ENCODE measurements at regions of chr13 and their contacts with region 1.

Region 1: GRCh38 chr13:99103536-99103935 is 97.1 kb upstream of the UBAC2 start:
- DNase-seq: no peak
- ATAC-seq: no peak
- H3K4me3 ChIP-seq: no peak overlapping the region
- H3K4me3 Mint-ChIP-seq: no peak overlapping the region
- H3K27ac ChIP-seq: no peak overlapping the region
- H3K27ac Mint-ChIP-seq: no peak overlapping the region
- H3K4me1 ChIP-seq: no peaks in the 10 kb centered on the region
- H3K4me1 Mint-ChIP-seq: no peaks in the 10 kb centered on the region
- H3K27me3 ChIP-seq: no peaks in the 10 kb centered on the region
- H3K27me3 Mint-ChIP-seq: no peaks in the 10 kb centered on the region
- CTCF ChIP-seq: no peak

Region 2: GRCh38 chr13:98685146-98685545 is 418.4 kb before region 1 on chr13:
- CTCF ChIA-PET with region 1: no interaction called
- POLR2A ChIA-PET with region 1: no interaction called
- intact Hi-C with region 1: no loop called
- DNase-seq: no peak
- ATAC-seq: no peak
- H3K4me3 ChIP-seq: no peak overlapping the region
- H3K4me3 Mint-ChIP-seq: no peak overlapping the region
- H3K27ac ChIP-seq: no peak overlapping the region
- H3K27ac Mint-ChIP-seq: no peak overlapping the region
- H3K4me1 ChIP-seq: no peaks in the 10 kb centered on the region
- H3K4me1 Mint-ChIP-seq: no peaks in the 10 kb centered on the region
- H3K27me3 ChIP-seq: no peaks in the 10 kb centered on the region
- H3K27me3 Mint-ChIP-seq: peaks cover 7% of the 10 kb centered on the region
- CTCF ChIP-seq: no peak

Region 3: GRCh38 chr13:99158846-99159245 is 55.3 kb after region 1 on chr13:
- CTCF ChIA-PET with region 1: no interaction called
- POLR2A ChIA-PET with region 1: no interaction called
- intact Hi-C with region 1: loop called in 1 of 2 experiments (anchors 5 kb)
- DNase-seq: no peak
- ATAC-seq: no peak
- H3K4me3 ChIP-seq: no peak overlapping the region
- H3K4me3 Mint-ChIP-seq: no peak overlapping the region
- H3K27ac ChIP-seq: no peak overlapping the region
- H3K27ac Mint-ChIP-seq: no peak overlapping the region
- H3K4me1 ChIP-seq: no peaks in the 10 kb centered on the region
- H3K4me1 Mint-ChIP-seq: no peaks in the 10 kb centered on the region
- H3K27me3 ChIP-seq: peaks cover 0 to 2% of the 10 kb centered on the region in 2 experiments
- H3K27me3 Mint-ChIP-seq: no peaks in the 10 kb centered on the region
- CTCF ChIP-seq: no peak

Measured in CD4-positive, alpha-beta T cell (primary cell).